ENCODE measurements at regions of chr15 and their contacts with region 1.

Region 1: DNA sequence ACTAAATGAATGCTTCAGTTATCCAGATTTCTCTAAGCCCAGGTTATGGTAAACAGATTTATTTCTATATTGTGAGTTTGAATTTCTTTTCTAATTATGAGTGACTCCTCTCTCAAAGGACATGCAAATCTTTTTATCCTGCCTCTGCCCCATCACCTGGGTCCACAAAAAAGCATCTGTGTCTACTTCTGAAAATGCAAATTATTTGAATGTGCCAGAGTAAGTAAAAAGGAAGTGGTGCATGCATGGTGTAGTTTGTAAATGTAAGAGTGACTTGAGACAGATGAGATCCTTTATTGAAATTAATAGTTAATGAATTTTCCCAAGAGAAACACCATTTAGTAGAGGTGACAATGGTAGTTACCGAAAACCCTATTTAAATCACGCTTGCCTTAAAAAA is 26.9 kb downstream of the MCTP2 start:
- DNase-seq: no peak
- ATAC-seq: peak; percentile 72
- H3K4me3 Mint-ChIP-seq: peak overlapping the region; percentile 16
- H3K27ac Mint-ChIP-seq: peak overlapping the region; percentile 84
- H3K4me1 Mint-ChIP-seq: peaks cover 92% of the 10 kb centered on the region
- H3K27me3 Mint-ChIP-seq: no peaks in the 10 kb centered on the region
- CTCF ChIP-seq: no peak

Region 2: GRCh38 chr15:94174399-94174802 is 83.8 kb before region 1 on chr15:
- CTCF ChIA-PET with region 1: no interaction called
- POLR2A ChIA-PET with region 1: no interaction called
- intact Hi-C with region 1: loop called (anchors 1 kb)
- DNase-seq: no peak
- ATAC-seq: peak; percentile 91
- H3K4me3 Mint-ChIP-seq: peak overlapping the region; percentile 39
- H3K27ac Mint-ChIP-seq: peak overlapping the region; percentile 31
- H3K4me1 Mint-ChIP-seq: peaks cover 25% of the 10 kb centered on the region
- H3K27me3 Mint-ChIP-seq: peaks cover 19% of the 10 kb centered on the region
- CTCF ChIP-seq: no peak

Region 3: DNA sequence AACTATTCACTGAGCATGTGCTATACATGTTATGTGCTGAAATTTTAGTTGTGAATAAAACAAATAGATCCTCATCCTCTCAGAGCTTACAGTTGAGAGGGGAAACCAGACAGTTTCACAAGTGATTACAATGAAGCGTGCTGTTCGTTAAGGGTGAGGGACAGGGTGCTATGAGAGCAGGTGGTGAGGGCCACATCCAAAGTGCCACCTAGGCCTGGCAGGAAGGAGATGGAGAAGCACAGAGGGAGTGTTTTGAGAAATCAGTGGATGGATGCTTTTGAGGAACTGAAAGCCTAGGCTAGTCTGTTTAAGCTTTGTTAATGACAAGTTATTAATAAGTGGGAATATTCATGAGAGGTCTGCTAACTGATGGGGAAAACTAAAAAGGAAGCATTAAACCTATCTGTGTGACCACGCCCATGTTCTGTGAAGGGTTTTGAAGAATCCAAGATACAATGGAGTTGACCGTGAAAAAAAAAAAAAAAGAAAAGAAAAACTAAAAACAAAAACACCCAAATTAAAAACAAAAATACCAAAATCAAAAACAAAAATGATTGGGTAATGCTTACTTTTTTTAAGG is 19.6 kb before region 1 on chr15:
- CTCF ChIA-PET with region 1: interaction called, 3 read pairs
- POLR2A ChIA-PET with region 1: interaction called, 11 read pairs
- intact Hi-C with region 1: loop called (anchors 1 kb)
- DNase-seq: no peak
- ATAC-seq: peak; percentile 83
- H3K4me3 Mint-ChIP-seq: peak overlapping the region; percentile 52
- H3K27ac Mint-ChIP-seq: peak overlapping the region; percentile 86
- H3K4me1 Mint-ChIP-seq: peaks cover 80% of the 10 kb centered on the region
- H3K27me3 Mint-ChIP-seq: no peaks in the 10 kb centered on the region
- CTCF ChIP-seq: no peak

Region 4: GRCh38 chr15:94287794-94288246 is 29.6 kb after region 1 on chr15:
- CTCF ChIA-PET with region 1: interaction called, 7 read pairs
- POLR2A ChIA-PET with region 1: interaction called, 17 read pairs
- intact Hi-C with region 1: loop called (anchors 1 kb)
- DNase-seq: peak; percentile 41
- ATAC-seq: peak; percentile 92
- H3K4me3 Mint-ChIP-seq: peak overlapping the region; percentile 80
- H3K27ac Mint-ChIP-seq: peak overlapping the region; percentile 92
- H3K4me1 Mint-ChIP-seq: peaks cover 89% of the 10 kb centered on the region
- H3K27me3 Mint-ChIP-seq: no peaks in the 10 kb centered on the region
- CTCF ChIP-seq: no peak

Region 5: GRCh38 chr15:94306700-94307650 is 48.7 kb after region 1 on chr15:
- CTCF ChIA-PET with region 1: interaction called, 3 read pairs
- POLR2A ChIA-PET with region 1: interaction called, 7 read pairs
- intact Hi-C with region 1: loop called (anchors 1 kb)
- DNase-seq: no peak
- ATAC-seq: peak; percentile 86
- H3K4me3 Mint-ChIP-seq: peak overlapping the region; percentile 66
- H3K27ac Mint-ChIP-seq: peak overlapping the region; percentile 93
- H3K4me1 Mint-ChIP-seq: peaks cover 48% of the 10 kb centered on the region
- H3K27me3 Mint-ChIP-seq: no peaks in the 10 kb centered on the region
- CTCF ChIP-seq: no peak